ENCODE measurements at regions of chr20 and their contacts with region 1.

Region 1: DNA sequence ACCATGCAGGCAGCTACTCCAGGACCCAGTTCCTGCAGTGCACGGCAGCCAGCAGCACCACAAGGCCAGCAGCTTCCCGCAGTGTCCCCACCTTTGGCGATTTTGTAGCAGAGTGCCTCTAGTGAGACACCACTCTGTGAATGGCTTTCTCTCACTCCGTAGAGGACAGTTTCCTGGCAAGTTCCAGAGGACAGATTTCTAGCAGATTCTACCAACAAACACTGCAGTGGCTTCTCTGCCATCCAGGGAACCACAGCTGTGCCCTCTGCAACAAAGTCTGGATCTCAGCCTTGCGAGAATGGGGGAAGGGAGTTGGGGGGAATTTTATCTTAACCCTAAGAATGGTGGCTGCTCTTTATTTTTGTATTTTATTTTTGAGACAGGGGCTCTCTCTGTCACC is 28.7 kb downstream of the SNHG17 start:
- DNase-seq: no peak
- ATAC-seq: no peak

Region 2: DNA sequence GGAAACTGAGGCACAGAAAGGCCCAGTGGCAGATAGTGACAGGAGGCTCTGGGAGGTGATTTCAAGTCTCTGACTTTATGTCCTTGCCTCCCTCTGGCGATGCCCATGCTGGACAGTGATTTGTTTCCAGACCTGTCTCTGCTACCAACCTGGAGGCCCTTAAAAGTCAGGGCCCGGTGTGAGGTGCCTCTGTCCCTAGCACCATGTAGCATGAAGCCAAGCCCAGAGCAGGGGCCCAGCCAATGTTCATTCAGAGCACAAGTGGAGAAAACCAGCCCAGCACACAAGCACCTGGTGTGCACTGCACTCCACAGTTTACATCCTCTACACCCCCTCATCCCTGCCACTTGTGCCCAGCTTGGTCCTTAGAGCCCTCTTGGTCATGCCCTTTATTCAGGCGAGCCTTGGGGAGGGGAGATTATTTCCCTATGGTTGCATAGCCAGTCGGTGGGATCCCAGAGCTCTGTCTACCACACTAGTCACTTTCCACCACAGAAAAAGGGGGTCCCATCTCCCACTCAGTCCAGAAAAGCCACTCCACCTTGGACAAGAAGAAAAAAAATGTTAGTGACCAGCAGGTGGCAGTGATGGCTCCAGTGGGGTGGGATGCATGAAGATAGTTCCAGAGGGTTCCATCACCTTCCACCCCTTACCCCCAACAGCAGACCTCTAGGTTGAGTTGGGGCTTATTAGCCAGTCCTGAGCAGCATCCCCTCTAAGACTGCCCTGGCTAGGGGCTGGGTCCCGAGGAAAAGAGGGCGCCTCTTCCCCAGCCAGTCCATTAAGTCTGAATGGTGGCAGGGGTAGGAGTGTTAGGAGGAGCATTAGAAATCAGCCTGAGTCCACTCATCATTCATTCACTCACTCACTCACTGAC is 176.9 kb before region 1 on chr20:
- intact Hi-C with region 1: loop called in 1 of 2 experiments (anchors 10 kb)
- DNase-seq: peak; percentile 17
- ATAC-seq: no peak

Region 3: DNA sequence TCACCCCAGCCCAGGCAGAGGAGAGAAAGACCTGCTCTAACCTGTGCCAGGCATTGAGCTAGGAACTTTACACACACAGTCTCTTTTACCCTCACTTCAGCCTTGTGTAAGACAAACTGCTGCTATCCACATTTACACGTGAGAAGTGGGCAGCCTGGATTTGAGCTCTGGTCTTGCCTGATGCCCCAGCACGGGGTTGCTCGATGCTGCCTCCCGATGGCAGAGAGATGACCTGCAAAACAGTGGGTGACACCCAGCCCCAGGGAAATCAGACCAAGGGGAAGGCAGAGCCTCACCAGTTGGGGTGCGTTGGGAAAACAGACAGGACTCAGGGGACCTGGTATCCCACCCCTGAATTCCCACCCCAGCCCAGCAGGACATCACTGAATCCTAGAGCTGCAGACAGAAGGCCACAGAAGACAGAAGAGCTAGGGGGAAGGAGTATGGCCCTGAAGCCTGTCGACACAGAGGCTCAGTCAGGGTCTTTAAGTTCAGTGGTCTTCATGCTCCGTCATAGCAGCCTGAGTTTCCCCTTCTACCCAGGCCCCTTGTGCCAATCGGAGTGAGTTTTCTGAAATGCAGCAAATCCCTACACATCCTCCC is 101.5 kb before region 1 on chr20:
- intact Hi-C with region 1: no loop called
- DNase-seq: peak; percentile 40
- ATAC-seq: peak; percentile 19 to 22

Region 4: GRCh38 chr20:38337561-38338140 is 68.8 kb before region 1 on chr20:
- intact Hi-C with region 1: loop called in 1 of 2 experiments (anchors 10 kb)
- DNase-seq: peak; percentile 38
- ATAC-seq: peak in 1 of 2 donors; percentile 57

Region 5: GRCh38 chr20:38833857-38834164 is 427.3 kb after region 1 on chr20:
- intact Hi-C with region 1: no loop called
- DNase-seq: no peak
- ATAC-seq: no peak